Caco-2 (cell line): ENCODE measurements at regions of chr9 and their contacts with region 1.

Region 1: DNA sequence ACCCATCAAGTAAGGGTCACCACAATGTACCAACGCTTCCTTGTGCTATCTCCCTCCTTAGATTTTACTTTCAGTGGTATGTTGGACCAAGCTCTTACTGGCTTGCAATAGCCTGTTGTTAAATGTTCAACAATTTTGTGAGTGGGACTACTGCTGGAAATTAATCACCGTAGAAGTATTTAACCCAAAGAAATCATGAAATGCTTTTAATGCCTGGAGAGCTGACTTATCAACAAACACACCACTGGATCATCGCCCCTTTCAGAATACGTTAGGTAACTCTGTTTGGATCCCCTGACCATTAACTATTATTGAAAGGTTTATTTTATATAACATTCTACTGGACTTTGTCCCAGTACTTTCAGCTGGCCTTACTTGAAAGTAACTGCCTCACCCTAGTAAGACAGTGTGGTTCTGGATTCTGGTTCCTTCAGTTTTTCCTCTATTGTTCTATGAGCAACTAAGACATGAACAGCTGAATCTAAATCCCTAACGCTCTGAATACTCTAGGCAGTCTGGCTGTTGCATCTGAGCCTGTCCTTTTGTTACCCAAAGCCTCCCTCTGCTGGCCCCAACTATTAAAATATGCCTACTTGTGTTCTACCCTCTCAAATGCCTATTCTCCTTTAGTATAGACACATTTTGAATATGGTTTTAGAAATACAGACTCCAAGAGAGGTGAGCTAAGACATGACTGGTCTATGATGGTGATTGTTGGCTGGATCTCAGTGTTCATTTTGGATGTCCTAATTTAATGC is 1203.4 kb upstream of the DMAC1 start:
- DNase-seq: peak in 1 of 2 experiments; percentile 19
- H3K4me3 ChIP-seq: no peak overlapping the region
- H3K4me3 Mint-ChIP-seq: no peak overlapping the region
- H3K27ac Mint-ChIP-seq: no peak overlapping the region
- H3K4me1 ChIP-seq: no peaks in the 10 kb centered on the region
- H3K4me1 Mint-ChIP-seq: no peaks in the 10 kb centered on the region
- H3K27me3 ChIP-seq: no peaks in the 10 kb centered on the region
- H3K27me3 Mint-ChIP-seq: no peaks in the 10 kb centered on the region
- CTCF ChIP-seq: no peak

Region 2: DNA sequence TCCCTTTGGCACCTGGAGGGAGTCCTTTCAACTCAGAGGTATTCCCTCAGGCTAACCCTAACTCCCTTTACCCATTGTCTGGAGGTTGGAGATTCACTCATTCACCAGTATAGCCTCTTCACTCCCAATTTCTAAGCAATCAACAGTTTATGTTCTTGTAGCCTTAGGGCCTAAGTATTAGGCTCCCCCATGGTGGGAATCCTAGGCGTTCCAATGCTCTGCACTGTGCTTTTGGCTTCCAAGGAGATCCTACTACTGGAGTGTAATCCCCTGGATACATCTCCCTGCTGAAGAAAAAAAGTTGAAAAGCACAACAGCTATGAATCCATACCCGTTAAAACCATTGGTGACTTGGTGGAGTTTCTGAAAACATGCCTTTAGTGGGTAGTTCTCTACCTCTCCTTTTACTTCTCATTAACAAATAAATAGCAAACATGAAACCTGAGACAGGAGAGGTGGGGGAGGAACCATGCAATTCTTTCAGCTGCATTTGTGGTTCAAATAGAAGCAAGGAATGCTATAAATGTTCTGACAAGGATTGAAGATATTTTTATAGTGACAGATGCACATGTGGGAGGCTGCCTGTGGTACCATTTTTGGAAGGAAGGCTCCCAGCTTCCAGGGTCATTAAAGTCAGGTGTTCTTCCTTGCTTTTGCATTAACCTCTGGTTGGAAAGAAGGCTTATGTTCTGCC is 1600.5 kb before region 1 on chr9:
- CTCF ChIA-PET with region 1: no interaction called
- POLR2A ChIA-PET with region 1: no interaction called
- intact Hi-C with region 1: loop called (anchors 5 kb)
- DNase-seq: no peak
- H3K4me3 ChIP-seq: no peak overlapping the region
- H3K4me3 Mint-ChIP-seq: no peak overlapping the region
- H3K27ac Mint-ChIP-seq: no peak overlapping the region
- H3K4me1 ChIP-seq: no peaks in the 10 kb centered on the region
- H3K4me1 Mint-ChIP-seq: no peaks in the 10 kb centered on the region
- H3K27me3 ChIP-seq: no peaks in the 10 kb centered on the region
- H3K27me3 Mint-ChIP-seq: peaks cover 9% of the 10 kb centered on the region
- CTCF ChIP-seq: no peak

Region 3: GRCh38 chr9:7570107-7570720 is 1432.8 kb before region 1 on chr9:
- CTCF ChIA-PET with region 1: no interaction called
- POLR2A ChIA-PET with region 1: no interaction called
- intact Hi-C with region 1: loop called (anchors 1 kb)
- DNase-seq: peak; percentile 55 to 73
- H3K4me3 ChIP-seq: no peak overlapping the region
- H3K4me3 Mint-ChIP-seq: no peak overlapping the region
- H3K27ac Mint-ChIP-seq: no peak overlapping the region
- H3K4me1 ChIP-seq: no peaks in the 10 kb centered on the region
- H3K4me1 Mint-ChIP-seq: no peaks in the 10 kb centered on the region
- H3K27me3 ChIP-seq: no peaks in the 10 kb centered on the region
- H3K27me3 Mint-ChIP-seq: no peaks in the 10 kb centered on the region
- CTCF ChIP-seq: peak; percentile 69

Region 4: DNA sequence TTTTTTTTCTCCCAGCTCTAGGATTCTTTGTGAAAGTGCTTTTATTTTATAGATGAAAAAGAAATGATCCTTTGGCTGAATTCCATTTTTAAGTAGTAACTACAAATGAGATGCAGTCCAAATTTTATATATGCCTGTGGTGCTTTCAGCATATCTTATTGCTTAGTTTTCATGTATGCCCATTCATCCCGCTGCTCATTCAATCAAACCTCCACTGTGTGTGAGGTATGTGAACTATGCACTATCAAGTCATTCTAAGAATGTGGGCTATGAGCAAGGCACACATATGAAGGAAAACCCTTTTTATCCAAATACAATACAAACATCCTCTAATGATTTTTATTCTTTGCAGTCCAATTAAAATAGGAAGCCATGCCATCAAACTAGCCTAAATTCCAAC is 134.4 kb before region 1 on chr9:
- CTCF ChIA-PET with region 1: no interaction called
- POLR2A ChIA-PET with region 1: no interaction called
- intact Hi-C with region 1: no loop called
- DNase-seq: peak in 1 of 2 experiments; percentile 5
- H3K4me3 ChIP-seq: no peak overlapping the region
- H3K4me3 Mint-ChIP-seq: no peak overlapping the region
- H3K27ac Mint-ChIP-seq: peak overlapping the region; percentile 53
- H3K4me1 ChIP-seq: peaks cover 26% of the 10 kb centered on the region
- H3K4me1 Mint-ChIP-seq: peaks cover 6% of the 10 kb centered on the region
- H3K27me3 ChIP-seq: no peaks in the 10 kb centered on the region
- H3K27me3 Mint-ChIP-seq: no peaks in the 10 kb centered on the region
- CTCF ChIP-seq: no peak